CD4-positive, alpha-beta memory T cell (primary cell): ENCODE measurements at regions of chr1 and their contacts with region 1.

Region 1: DNA sequence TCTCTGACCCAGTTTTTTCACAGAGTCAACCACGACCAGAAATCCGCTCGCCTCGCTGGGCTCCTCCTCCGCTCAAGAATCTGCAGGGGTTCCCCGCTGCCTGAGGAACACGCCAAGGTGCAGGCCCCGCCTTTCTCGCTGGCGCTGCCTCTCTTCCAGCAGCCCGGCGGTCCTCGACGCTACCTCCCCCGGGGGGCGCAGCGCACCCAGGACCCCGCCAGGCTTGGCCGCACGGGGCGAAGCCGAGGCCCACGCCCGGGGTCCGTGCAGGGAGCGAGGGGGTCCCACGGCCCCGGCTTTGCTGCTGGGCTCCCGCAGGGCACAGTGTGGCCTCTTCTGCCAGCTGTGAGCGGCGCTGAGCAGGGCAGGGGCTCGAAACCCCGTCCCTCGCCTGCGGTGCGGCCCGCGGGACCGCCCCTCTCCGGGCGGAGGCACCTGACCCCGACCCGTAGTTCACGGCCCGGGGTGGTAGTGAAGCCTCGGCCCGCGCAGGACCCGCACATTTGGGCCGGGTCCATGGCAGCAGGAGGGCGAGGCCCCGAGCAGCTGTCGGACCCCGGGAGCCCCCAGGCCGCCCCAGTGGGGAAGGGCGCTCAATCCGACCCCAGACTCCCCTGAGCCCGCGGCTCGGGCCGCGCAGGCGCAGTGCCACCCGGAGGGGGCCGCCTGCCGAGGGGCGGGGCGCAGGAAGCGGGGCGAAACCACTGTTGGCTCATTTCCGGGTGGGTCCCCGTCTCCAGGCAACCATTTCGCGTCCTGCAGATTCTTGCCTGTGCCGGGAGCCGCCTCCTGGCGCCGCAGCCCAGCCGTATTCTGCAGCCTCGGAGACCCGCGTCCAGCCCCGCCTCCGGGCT is 10.0 kb upstream of the MMEL1 start:
- DNase-seq: peak; percentile 95 to 96 (median 95)
- H3K4me3 ChIP-seq: peak overlapping the region; percentile 69 to 83
- H3K4me3 Mint-ChIP-seq: peak overlapping the region; percentile 85 to 94 (median 88)
- H3K27ac ChIP-seq: peak overlapping the region; percentile 99
- H3K27ac Mint-ChIP-seq: peak overlapping the region; percentile 85 to 99 (median 96)
- H3K4me1 ChIP-seq: peaks cover 16% of the 10 kb centered on the region
- H3K4me1 Mint-ChIP-seq: peaks cover 2 to 21% (median 10%) of the 10 kb centered on the region in 4 donors
- H3K27me3 ChIP-seq: no peaks in the 10 kb centered on the region
- H3K27me3 Mint-ChIP-seq: no peaks in the 10 kb centered on the region

Region 2: DNA sequence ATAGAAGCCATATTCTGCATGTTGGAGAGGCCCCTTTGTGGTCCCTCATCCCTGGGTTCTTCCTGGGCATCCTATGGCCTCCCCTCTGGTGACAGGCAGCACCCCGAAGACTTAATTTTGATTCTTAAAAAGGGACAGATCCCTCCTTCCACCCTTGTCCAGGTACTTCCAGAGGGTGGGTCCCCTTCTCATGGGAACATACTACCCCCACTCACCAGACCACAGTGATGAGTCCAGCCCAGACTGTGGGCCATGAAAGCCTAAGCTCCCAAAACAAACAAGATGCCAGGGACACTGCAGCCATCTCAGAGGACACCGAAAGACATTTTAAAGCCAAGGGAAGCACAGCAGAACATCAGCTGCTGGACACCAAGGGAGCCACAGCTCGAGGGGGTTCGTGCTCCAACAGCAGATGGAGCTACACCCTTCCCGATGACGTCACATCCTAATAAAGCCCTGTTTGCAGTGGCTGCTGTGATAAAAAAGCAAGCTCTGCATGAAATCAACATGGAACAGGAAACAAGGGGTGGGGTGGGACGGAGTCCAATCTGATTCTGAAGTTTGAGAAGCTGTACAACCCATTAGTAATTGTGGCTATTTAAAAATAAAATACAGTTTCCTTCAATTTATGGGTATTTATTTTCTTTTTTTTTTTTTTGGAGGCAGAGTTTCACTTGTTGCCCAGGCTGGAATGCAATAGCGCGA is 784.3 kb before region 1 on chr1:
- CTCF ChIA-PET with region 1: no interaction called
- POLR2A ChIA-PET with region 1: no interaction called
- intact Hi-C with region 1: no loop called
- DNase-seq: peak; percentile 39 to 61 (median 47)
- H3K4me3 ChIP-seq: no peak overlapping the region
- H3K4me3 Mint-ChIP-seq: peak overlapping the region in 7 of 8 donors; percentile 44 to 62 (median 55)
- H3K27ac ChIP-seq: peak overlapping the region; percentile 49
- H3K27ac Mint-ChIP-seq: peak overlapping the region; percentile 73 to 95 (median 89)
- H3K4me1 ChIP-seq: peaks cover 88% of the 10 kb centered on the region
- H3K4me1 Mint-ChIP-seq: peaks cover 49 to 88% (median 70%) of the 10 kb centered on the region in 4 donors
- H3K27me3 ChIP-seq: no peaks in the 10 kb centered on the region
- H3K27me3 Mint-ChIP-seq: no peaks in the 10 kb centered on the region

Region 3: DNA sequence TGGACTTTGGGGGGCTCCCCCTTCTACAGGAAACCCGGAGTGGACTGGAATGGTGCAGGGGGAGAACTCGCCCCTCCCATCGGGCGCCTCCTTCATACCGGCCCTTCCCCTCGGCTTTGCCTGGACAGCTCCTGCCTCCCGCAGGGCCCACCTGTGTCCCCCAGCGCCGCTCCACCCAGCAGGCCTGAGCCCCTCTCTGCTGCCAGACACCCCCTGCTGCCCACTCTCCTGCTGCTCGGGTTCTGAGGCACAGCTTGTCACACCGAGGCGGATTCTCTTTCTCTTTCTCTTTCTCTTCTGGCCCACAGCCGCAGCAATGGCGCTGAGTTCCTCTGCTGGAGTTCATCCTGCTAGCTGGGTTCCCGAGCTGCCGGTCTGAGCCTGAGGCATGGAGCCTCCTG is 86.5 kb before region 1 on chr1 and contains the start of gene TNFRSF14:
- CTCF ChIA-PET with region 1: interaction called, 3 read pairs
- POLR2A ChIA-PET with region 1: interaction called, 11 read pairs
- intact Hi-C with region 1: no loop called
- DNase-seq: peak; percentile 77 to 88 (median 78)
- H3K4me3 ChIP-seq: peak within 1 kb of the TSS; percentile 95 to 98
- H3K4me3 Mint-ChIP-seq: peak within 1 kb of the TSS; percentile 92 to 99 (median 96)
- H3K27ac ChIP-seq: peak within 1 kb of the TSS; percentile 98
- H3K27ac Mint-ChIP-seq: peak within 1 kb of the TSS; percentile 95 to 100 (median 98)
- H3K4me1 ChIP-seq: peaks cover 43% of the 10 kb centered on the region
- H3K4me1 Mint-ChIP-seq: peaks cover 9 to 50% (median 30%) of the 10 kb centered on the region in 4 donors
- H3K27me3 ChIP-seq: no peaks in the 10 kb centered on the region
- H3K27me3 Mint-ChIP-seq: no peaks in the 10 kb centered on the region
- total RNA-seq, gene TNFRSF14: 170 to 173 TPM